ENCODE measurements at regions of chr3 and their contacts with region 1.

Region 1: GRCh38 chr3:154120961-154121700 is at the start of gene ARHGEF26:
- DNase-seq: peak; percentile 44
- ATAC-seq: peak; percentile 78
- H3K4me3 ChIP-seq: peak within 1 kb of the TSS; percentile 62 to 79 (median 66)
- H3K27ac ChIP-seq: no peak within 1 kb of the TSS
- H3K4me1 ChIP-seq: peaks cover 48% of the 10 kb centered on the region
- H3K27me3 ChIP-seq: peaks cover 0 to 32% of the 10 kb centered on the region in 2 experiments; a peak in 3 of 5 replicates
- CTCF ChIP-seq: 0 out of 2 replicates have a peak, but pooled peaks have one; percentile 4
- EP300 ChIP-seq: no peak
- POLR2A ChIP-seq: peak in 1 of 2 experiments; percentile 41; a peak in 2 of 4 replicates
- RAD21 ChIP-seq: no peak
- total RNA-seq, gene ARHGEF26: 6.1 and 6.3 TPM in 2 replicates

Region 2: DNA sequence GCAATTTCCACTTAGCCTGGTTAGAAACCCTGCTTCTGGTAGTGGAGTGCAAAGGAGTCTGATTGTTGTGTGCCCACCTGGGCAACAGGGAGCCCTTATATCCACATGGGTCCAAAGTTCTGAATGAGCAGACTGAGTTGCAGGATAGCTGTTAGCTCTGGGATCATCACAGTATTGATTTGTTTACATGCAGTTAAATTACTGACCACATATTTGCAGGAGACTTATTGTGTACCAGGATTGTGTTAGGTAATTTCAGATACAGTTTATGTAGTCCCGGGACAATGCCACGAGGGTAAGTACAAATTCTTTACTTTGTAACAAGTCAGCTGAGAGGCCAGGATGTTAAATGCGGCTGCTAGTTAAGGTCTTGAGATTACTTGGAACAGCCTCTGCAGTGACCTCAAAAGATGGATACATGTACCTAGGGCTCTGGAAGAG is 18.9 kb after region 1 on chr3:
- CTCF ChIA-PET with region 1: no interaction called
- POLR2A ChIA-PET with region 1: interaction called, 3 read pairs
- in situ Hi-C with region 1: no loop called
- intact Hi-C with region 1: loop called (anchors 1 kb)
- DNase-seq: peak; percentile 96
- ATAC-seq: peak; percentile 99
- H3K4me3 ChIP-seq: no peak overlapping the region; a peak in 1 of 6 replicates
- H3K27ac ChIP-seq: no peak overlapping the region
- H3K4me1 ChIP-seq: peaks cover 23% of the 10 kb centered on the region
- H3K27me3 ChIP-seq: 0 out of 5 replicates have a peak, but pooled peaks cover 0 to 4% of the 10 kb centered on the region in 2 experiments
- CTCF ChIP-seq: no peak
- EP300 ChIP-seq: peak; percentile 29 to 87; a peak in 3 of 4 replicates
- POLR2A ChIP-seq: no peak
- RAD21 ChIP-seq: no peak

Region 3: DNA sequence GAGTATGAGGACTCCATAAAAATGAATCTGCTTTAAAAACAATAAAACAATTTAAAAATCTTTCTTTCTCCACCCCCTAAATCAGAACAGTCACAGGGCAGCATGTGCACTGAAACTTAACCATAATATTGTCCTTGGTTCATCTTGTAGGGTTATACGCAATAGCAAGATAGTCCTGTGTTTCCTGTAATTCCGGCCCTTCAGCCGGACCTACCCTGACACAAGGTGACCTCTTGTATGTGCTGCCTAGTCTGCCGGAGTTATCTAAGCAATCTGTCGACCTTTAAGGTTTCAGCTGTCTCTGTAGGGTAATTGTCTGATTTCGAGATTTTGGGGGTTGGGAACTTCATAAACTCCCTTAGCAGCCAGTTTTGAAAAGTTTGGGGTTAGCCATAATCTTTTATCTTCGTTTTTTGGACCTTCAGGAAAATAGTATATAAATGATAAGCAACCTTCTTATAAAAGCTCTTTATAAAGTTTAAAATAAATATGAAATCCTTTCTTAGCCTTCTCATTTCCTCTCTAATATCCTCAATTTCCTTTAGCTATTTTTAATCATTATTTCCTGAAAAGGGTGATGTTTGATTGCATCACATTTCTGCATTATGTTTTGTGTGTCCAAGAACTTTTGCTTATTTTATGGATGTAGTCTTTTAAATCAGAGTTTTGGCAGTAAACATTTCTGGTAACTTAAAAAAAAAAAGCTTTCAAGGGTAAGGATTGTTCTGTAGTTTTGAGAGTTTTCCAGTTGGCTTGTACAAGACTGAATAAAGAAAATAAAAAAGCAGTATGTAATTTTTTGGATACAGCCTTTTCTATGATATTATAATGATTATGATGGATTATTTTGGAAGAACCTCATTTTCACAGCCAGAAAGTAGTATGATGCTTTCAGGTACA is 103.5 kb after region 1 on chr3:
- CTCF ChIA-PET with region 1: no interaction called
- POLR2A ChIA-PET with region 1: no interaction called
- in situ Hi-C with region 1: no loop called
- intact Hi-C with region 1: loop called (anchors 10 kb)
- DNase-seq: no peak
- ATAC-seq: no peak
- H3K4me3 ChIP-seq: no peak overlapping the region
- H3K27ac ChIP-seq: no peak overlapping the region
- H3K4me1 ChIP-seq: peaks cover 11% of the 10 kb centered on the region
- H3K27me3 ChIP-seq: no peaks in the 10 kb centered on the region
- CTCF ChIP-seq: no peak
- EP300 ChIP-seq: no peak
- POLR2A ChIP-seq: no peak
- RAD21 ChIP-seq: no peak

Region 4: GRCh38 chr3:154310840-154311239 is 189.7 kb after region 1 on chr3:
- CTCF ChIA-PET with region 1: no interaction called
- POLR2A ChIA-PET with region 1: no interaction called
- in situ Hi-C with region 1: no loop called
- intact Hi-C with region 1: no loop called
- DNase-seq: no peak
- ATAC-seq: no peak
- H3K4me3 ChIP-seq: no peak overlapping the region
- H3K27ac ChIP-seq: no peak overlapping the region
- H3K4me1 ChIP-seq: no peaks in the 10 kb centered on the region
- H3K27me3 ChIP-seq: no peaks in the 10 kb centered on the region
- CTCF ChIP-seq: no peak
- EP300 ChIP-seq: no peak
- POLR2A ChIP-seq: no peak
- RAD21 ChIP-seq: no peak

Measured in HepG2 (cell line).